ENCODE measurements at regions of chr9 and their contacts with region 1.

Region 1: DNA sequence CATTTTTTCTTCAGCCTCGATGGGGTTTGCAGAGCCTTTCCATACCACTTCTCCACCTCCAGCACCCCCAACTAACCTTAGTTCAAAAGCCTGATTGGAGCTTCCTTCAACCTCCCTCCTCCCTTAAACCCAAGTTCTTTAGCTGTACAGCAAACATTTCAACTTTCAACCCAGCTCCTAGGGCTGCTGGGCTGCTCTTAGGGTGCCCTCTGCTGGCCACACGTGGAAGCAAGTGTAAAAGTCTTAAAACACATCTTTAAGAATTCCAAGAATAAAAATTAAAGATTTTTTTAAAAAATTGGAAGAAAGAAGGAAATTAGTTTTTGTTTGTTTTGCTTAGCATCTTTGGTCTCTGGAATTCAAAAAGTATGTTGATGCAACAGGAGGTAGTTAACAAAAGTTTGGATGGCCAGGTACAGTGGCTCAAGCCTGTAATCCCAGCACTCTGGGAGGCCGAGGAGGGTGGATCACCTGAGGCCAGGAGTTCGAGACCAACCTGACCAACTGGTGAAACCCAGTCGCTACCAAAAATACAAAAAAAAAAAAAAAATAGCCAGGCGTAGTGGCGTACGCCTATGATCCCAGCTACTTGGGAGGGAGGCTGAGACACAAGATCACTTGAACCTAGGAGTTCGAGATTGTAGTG is 15.5 kb upstream of the HSD17B3 start:
- DNase-seq: no peak

Region 2: DNA sequence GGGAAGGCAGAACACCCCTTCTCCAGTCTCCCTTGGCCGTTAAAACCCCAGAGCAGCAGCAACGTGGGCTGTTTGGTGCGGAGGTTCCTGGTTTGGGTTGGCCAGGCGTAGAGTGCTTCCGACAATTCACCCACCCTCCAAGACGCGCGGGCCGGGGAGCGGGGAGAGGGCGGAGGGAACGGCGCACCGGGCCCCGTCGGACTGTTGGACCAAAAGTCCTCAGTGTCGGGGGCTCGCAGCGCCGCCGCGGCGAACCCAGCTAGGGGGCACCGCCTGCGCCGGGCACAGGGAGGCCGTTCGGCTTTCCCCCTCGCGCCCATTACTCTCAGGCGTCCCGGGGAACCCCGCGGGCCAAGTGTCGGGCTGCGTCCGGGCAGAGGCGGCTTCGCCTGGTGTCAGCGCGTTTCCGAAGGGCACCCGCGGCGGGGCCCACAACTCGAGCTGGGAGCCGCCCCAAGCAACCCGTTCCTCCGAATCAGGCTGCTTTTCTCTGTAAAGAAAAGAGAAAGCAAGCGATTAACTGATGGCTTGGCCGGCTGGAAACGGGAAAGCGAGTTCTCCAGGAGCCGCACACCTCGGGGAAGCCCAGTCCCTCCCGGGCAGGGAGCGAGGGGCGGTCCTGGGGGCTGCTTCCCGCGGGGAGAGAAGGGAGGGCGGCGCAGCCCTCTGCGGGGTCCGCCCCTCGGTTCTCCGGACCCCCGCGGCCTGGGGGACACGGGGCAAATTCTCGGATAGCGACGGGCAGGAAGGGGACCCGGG is 296.5 kb before region 1 on chr9:
- intact Hi-C with region 1: no loop called
- DNase-seq: no peak

Region 3: GRCh38 chr9:96232539-96233241 is 84.8 kb before region 1 on chr9:
- intact Hi-C with region 1: loop called (anchors 5 kb)
- DNase-seq: no peak

Region 4: DNA sequence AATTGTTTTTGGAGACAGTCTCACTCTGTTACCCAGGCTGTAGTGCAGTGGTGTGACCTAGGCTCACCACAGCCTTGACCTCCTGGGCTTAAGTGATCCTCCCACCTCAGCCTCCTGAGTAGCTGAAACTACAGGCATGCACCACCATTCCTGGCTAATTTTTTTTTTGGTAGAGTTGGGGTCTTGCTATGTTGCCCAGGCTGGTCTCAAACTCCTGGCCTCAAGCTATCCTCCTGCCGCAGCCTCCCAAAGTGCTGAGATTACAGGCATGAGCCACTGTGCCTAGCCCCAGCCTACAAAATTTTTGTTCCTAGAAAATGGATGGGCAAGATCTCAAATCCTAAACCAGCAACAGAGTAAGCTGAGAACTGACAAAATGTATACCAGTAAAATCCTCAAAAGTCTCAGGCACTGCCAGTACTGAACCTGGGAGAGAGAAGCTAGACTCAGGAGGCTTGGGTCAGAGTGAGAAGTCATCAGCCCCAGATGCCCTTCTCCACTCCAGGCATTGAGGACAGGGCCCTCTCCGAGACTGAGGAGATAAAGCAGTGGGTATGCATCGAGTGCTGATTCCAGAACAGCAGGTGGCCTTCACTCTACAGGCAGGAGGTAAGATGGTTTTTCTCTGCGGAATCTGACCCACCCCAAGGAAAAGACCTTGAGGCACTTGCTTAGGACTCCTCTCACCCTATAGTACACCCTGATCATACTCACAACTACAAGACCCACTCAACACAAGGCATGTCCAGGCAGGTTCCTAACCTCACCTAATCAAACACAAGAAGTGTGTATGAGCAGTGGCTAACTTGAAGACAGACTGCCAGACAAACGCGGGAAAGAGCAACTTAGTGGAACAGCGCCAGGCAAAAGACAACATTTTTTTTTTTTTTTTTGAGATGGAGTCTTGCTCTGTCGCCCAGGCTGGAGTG is 50.9 kb before region 1 on chr9:
- intact Hi-C with region 1: no loop called
- DNase-seq: no peak

Measured in cardiac septum (tissue), 1 donor.